Colonic mucosa (tissue), 4 donors: ENCODE measurements at regions of chr2 and their contacts with region 1.

Region 1: GRCh38 chr2:64865073-64865830 is 123.9 kb upstream of the SLC1A4 start:
- DNase-seq: peak; percentile 61
- H3K4me3 ChIP-seq: peak overlapping the region; percentile 77
- H3K27ac ChIP-seq: peak overlapping the region; percentile 87
- H3K4me1 ChIP-seq: no peaks in the 10 kb centered on the region
- H3K27me3 ChIP-seq: no peaks in the 10 kb centered on the region
- CTCF ChIP-seq: peak; percentile 16

Region 2: DNA sequence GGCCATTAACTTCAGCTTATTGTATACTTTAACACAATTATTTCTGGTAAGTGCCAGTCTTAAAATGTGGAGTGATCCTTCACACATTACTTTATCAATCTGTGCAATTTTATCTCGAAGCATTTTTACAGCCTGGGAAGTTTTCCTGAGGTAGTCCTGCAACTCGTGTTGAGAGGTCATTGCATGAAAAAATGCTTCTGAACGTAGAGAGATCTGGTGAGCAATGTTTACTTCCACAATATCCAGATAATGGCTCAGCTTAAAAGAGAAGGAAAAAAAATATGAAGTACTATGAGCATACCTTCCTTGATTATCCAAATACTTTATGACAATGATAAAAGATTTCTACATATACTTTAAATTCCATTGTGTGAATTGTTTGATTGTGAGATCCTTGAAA is 903.1 kb before region 1 on chr2:
- intact Hi-C with region 1: no loop called
- DNase-seq: no peak
- H3K4me3 ChIP-seq: no peak overlapping the region
- H3K27ac ChIP-seq: no peak overlapping the region
- H3K4me1 ChIP-seq: no peaks in the 10 kb centered on the region
- H3K27me3 ChIP-seq: no peaks in the 10 kb centered on the region
- CTCF ChIP-seq: no peak

Region 3: DNA sequence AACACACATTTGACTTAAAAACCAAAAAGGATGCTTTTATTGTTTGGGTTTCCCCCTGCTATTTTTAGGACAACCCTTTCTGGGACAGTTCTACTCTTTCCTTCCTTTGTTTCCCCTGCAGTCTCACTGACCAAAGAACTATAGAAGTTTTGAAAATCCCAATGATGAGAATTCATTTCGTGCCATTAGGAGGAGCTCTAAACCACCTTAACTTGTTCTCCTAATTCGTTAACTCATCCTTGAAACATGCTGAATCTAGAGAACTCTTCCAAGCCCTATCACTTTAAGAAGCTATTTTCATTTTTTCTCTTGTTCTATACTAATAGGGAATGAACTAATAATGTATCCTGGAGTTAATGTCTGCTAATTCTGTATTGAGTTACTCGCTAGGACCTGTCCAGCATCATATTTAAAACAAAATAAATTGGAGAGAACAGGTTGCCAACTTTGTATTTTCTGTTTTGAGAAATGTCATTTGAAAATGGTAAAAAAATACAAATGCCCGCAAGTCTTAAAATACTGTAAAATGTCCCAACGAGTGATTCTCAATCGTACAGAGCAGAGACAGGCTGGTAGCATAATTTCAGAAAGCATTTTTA is 278.3 kb before region 1 on chr2:
- intact Hi-C with region 1: loop called (anchors 5 kb)
- DNase-seq: no peak
- H3K4me3 ChIP-seq: no peak overlapping the region
- H3K27ac ChIP-seq: no peak overlapping the region
- H3K4me1 ChIP-seq: no peaks in the 10 kb centered on the region
- H3K27me3 ChIP-seq: no peaks in the 10 kb centered on the region
- CTCF ChIP-seq: peak; percentile 36

Region 4: GRCh38 chr2:64750817-64751285 is 114.4 kb before region 1 on chr2:
- intact Hi-C with region 1: loop called (anchors 10 kb)
- DNase-seq: peak; percentile 98
- H3K4me3 ChIP-seq: peak overlapping the region; percentile 60
- H3K27ac ChIP-seq: peak overlapping the region; percentile 95
- H3K4me1 ChIP-seq: peaks cover 8% of the 10 kb centered on the region
- H3K27me3 ChIP-seq: no peaks in the 10 kb centered on the region
- CTCF ChIP-seq: no peak